PC-3 (cell line): ENCODE measurements at regions of chr3 and their contacts with region 1.

Region 1: GRCh38 chr3:13648060-13649001 is 99.4 kb downstream of the FBLN2 start:
- DNase-seq: peak; percentile 94
- ATAC-seq: peak; percentile 77
- H3K4me3 ChIP-seq: peak overlapping the region; percentile 66
- H3K27ac ChIP-seq: peak overlapping the region; percentile 69
- H3K4me1 ChIP-seq: peaks cover 33% of the 10 kb centered on the region
- H3K27me3 ChIP-seq: no peaks in the 10 kb centered on the region
- CTCF ChIP-seq: peak; percentile 99

Region 2: DNA sequence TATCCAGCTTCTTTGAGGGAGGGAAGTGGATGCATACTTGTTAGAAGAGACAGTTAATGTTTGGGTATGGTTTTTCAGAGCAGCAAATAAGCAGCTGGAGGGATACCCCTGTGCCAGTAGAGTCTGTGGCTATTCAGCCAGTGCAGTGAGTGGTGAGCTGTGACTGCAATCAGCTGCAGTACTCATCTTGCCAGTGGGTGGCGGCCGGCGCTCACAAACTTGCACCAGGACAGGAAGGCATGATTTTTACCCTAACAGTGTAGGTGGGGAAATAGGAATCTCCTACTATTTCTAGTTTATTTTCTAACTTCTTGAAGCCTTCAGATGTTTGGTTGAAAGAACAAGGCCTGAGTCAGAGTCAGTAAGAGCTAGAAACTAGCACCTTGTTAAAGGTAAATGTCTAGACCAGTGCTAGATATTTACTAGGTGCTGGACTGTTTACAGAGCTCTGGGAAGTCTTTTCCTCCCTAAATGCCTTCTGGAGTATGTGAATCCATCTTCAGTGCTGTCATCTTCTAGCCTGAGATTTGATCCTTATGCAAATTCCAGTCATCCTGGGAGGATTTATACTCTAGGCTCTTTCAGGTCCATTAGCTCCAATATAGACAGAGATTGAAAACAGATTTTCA is 1513.2 kb before region 1 on chr3:
- CTCF ChIA-PET with region 1: no interaction called
- POLR2A ChIA-PET with region 1: no interaction called
- intact Hi-C with region 1: no loop called
- DNase-seq: peak; percentile 83
- ATAC-seq: peak; percentile 90
- H3K4me3 ChIP-seq: no peak overlapping the region
- H3K27ac ChIP-seq: no peak overlapping the region
- H3K4me1 ChIP-seq: peaks cover 15% of the 10 kb centered on the region
- H3K27me3 ChIP-seq: no peaks in the 10 kb centered on the region
- CTCF ChIP-seq: peak; percentile 99

Region 3: DNA sequence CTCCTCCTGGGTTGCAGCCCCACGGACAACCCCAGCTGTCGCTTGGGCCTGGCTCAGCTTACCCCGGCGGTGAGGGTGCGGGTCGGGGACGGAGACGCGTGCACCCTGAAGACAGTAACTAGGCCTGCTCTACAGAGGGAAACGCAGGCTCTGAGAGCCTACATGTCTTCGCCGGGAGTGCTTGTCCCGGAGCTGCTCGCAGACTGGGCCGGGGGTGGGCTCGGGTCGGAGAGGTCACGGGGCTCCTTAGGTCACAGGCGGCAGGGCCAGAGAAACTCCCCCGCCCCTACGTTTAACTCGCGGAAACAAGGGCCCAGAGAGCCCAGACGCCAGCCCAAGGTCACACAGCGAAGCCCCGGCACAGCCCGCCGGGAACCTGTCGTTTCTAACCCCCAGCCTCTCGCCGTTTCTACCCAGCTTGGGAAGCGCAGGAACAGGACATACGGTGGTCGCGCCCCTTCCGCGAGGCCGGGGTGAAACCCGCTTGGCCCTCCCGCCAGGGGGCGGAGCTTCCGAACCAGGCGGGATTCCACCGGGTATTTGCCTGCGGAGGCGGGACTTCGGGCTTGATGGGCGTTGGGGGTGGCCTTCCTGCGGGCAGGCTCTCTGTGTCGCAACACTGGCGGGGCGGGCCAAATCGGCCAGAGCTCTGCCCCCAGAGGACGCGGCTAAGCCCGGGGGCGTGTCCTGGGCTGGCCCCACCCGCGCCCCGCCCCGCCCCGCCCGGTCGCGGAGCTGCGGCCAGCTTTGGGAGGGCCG is 168.6 kb before region 1 on chr3 and contains the start of gene HDAC11:
- CTCF ChIA-PET with region 1: interaction called, 9 read pairs
- POLR2A ChIA-PET with region 1: interaction called, 20 read pairs
- intact Hi-C with region 1: no loop called
- DNase-seq: peak; percentile 98
- ATAC-seq: peak; percentile 94
- H3K4me3 ChIP-seq: peak within 1 kb of the TSS; percentile 88
- H3K27ac ChIP-seq: 0 out of 2 replicates have a peak within 1 kb of the TSS, but pooled peaks have one; percentile 24
- H3K4me1 ChIP-seq: peaks cover 26% of the 10 kb centered on the region
- H3K27me3 ChIP-seq: no peaks in the 10 kb centered on the region
- CTCF ChIP-seq: no peak
- total RNA-seq, gene HDAC11: 21.8 and 24.2 TPM in 2 replicates

Region 4: DNA sequence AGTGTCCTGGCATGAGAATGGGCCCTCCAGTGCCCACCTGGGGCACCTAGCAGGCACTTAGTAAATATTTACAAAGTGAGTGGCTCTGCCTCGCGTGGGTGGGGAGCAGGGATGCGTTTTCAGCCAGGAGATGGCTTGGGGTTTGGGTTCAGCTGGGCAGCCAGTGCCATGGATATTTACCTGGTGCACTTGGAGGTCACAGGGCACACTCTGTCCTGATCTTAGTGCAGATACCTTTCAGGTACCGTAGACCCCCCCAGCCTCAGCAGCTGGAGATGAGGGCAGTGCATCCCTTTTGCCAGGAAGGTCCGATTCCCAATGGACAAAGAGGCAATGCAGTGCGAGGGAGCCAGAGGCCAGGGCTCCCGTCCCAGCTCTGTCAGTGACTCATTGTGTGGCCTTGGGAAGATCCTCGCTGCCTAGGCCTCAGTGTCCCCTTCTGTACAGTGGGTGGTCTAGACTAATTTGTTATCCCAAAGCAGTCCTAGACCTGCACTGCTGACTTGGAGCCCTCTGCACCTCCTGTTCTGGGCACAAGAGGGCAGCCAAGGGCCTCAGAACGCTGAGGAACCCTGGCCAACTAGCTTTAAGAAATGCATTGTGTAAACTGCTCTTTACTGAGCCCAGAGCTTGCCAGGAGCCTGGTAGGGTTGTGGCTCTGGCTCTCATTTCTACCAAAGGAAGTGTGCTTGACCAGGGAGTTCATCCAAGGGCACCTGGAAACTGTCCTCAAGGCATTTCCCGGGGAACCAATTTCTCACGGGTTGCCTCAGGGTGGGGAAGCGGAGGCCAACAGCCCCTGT is 152.2 kb before region 1 on chr3:
- CTCF ChIA-PET with region 1: interaction called, 125 read pairs
- POLR2A ChIA-PET with region 1: interaction called, 12 read pairs
- intact Hi-C with region 1: loop called (anchors 1 kb)
- DNase-seq: peak; percentile 92
- ATAC-seq: peak; percentile 91
- H3K4me3 ChIP-seq: no peak overlapping the region
- H3K27ac ChIP-seq: peak overlapping the region; percentile 25; the same call in 1 of the 2 replicates
- H3K4me1 ChIP-seq: peaks cover 11% of the 10 kb centered on the region
- H3K27me3 ChIP-seq: no peaks in the 10 kb centered on the region
- CTCF ChIP-seq: peak; percentile 96

Region 5: GRCh38 chr3:13600941-13601576 is 47.3 kb before region 1 on chr3:
- CTCF ChIA-PET with region 1: no interaction called
- POLR2A ChIA-PET with region 1: no interaction called
- intact Hi-C with region 1: loop called (anchors 2 kb)
- DNase-seq: peak; percentile 98
- ATAC-seq: peak; percentile 80
- H3K4me3 ChIP-seq: no peak overlapping the region
- H3K27ac ChIP-seq: peak overlapping the region; percentile 86
- H3K4me1 ChIP-seq: peaks cover 39% of the 10 kb centered on the region
- H3K27me3 ChIP-seq: no peaks in the 10 kb centered on the region
- CTCF ChIP-seq: no peak

Region 6: DNA sequence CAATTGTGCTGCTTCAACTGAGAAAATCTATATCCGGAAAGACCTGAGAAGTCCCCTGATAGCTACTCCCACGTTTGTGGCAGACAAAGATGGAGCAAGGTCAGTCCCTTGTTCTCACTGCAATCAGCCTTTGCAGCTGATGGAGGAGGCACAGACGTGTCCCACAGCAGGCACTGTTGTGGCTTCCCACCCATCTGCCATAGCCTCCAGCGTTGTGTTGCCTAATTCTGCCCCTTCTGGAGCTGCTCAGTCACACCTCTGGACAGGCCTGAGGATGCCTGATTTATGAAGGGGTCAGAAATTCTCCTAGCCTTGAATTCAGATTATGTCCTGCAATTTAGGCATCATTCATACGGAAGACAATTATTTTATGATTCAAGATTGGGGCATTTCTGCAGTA is 1374.9 kb after region 1 on chr3:
- CTCF ChIA-PET with region 1: no interaction called
- POLR2A ChIA-PET with region 1: no interaction called
- intact Hi-C with region 1: no loop called
- DNase-seq: no peak
- ATAC-seq: no peak
- H3K4me3 ChIP-seq: no peak overlapping the region
- H3K27ac ChIP-seq: no peak overlapping the region
- H3K4me1 ChIP-seq: no peaks in the 10 kb centered on the region
- H3K27me3 ChIP-seq: no peaks in the 10 kb centered on the region
- CTCF ChIP-seq: no peak